Activated T-helper 1 cell treated with anti-CD3 and anti-CD28 coated beads, Interleukin-12 subunit alpha, Interleukin-12 subunit beta, Interleukin-2, Interleukin-4 antibody, amounts not matched to agents 30 ng/mL and 10 ng/mL and 1 ng/mL, durations not matched to agents 14 hours and 24 hours and 36 hours (primary cell): ENCODE measurements at regions of chr21 and their contacts with region 1.

Region 1: GRCh38 chr21:28884976-28885852 is 107.5 kb downstream of the LTN1 start:
- DNase-seq: peak; percentile 95
- H3K4me3 Mint-ChIP-seq: peak overlapping the region; percentile 95
- H3K27ac Mint-ChIP-seq: peak overlapping the region; percentile 99
- H3K4me1 Mint-ChIP-seq: peaks cover 21% of the 10 kb centered on the region
- H3K27me3 Mint-ChIP-seq: peaks cover 5% of the 10 kb centered on the region

Region 2: DNA sequence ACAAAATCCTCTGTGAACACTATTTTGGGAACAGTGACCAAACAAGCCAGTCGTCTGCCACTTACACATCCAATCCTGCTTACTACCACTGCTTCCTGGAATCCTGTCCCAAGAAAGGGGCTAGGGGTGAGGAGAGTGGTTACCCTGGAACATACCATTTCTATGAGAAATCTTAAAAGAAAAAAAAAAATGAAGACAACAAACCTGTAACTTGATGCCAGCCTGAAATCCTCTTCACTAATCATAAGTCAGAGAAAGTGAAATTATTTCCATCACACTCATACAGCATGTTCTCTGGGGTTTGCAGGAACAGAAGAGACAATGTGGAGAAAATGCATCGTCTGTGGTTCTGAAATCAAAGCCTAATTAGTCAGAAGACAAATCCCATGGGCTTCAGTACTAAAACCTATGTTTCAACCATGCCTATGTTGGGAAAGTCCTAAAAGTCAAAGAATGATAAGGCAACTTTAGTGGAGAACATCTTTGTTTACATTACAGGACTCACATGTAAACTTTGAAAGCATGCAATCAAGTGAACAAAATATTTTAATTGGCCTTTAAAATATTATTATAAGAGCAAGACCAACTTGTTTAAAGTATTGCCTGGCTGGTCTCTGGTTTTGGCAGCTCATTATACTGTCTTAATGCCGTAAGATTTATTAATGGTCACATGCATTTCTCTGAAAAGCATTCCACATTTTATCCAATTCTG is 113.3 kb before region 1 on chr21:
- intact Hi-C with region 1: loop called (anchors 2 kb)
- DNase-seq: no peak
- H3K4me3 Mint-ChIP-seq: no peak overlapping the region
- H3K27ac Mint-ChIP-seq: peak overlapping the region; percentile 18
- H3K4me1 Mint-ChIP-seq: peaks cover 68% of the 10 kb centered on the region
- H3K27me3 Mint-ChIP-seq: no peaks in the 10 kb centered on the region

Region 3: GRCh38 chr21:28943631-28944030 is 58.4 kb after region 1 on chr21:
- intact Hi-C with region 1: loop called (anchors 5 kb)
- DNase-seq: no peak
- H3K4me3 Mint-ChIP-seq: no peak overlapping the region
- H3K27ac Mint-ChIP-seq: no peak overlapping the region
- H3K4me1 Mint-ChIP-seq: peaks cover 4% of the 10 kb centered on the region
- H3K27me3 Mint-ChIP-seq: no peaks in the 10 kb centered on the region

Region 4: DNA sequence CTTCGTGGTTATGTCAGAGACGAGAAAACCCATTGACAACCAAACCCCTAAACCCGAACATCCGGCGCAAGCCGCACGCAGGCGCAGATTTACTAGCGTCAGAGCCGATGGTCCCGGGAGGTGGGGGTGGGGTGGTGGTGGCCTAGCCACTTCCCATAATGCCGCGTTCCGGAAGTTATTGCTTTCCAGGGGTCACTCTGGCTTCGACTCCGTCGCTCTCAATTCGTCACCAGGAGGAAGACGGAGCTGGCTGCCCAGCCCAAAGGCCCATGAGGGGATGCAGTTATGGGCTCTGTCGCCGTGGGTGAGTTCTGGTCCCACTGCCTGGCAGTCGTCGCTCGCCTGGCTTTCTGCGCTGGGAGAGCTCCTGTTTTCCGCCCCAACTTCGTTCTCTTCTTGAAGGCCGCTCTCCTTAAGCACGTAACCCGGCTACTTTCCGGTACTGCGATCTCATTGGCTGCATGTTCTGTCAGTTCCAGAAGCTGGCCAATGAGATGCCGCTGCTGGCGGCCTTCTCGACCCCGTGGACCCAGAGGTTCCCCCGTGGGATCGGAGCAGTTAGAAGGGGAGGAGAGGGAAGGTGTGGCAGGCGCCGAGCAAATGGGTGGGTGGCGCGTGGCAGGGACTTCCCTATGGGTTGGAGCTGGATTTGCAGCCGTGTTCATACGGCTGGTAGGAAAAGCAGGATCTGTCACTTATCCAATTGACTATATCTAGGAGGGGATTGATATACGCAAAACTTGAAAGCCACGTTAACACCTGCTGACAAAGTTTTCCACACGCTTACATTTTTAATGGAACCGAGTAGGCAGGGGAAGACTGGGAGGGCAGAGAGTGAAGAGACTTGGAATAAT is 139.5 kb after region 1 on chr21 and contains the start of gene USP16:
- intact Hi-C with region 1: loop called (anchors 1 kb)
- DNase-seq: peak; percentile 95
- H3K4me3 Mint-ChIP-seq: peak within 1 kb of the TSS; percentile 99
- H3K27ac Mint-ChIP-seq: peak within 1 kb of the TSS; percentile 97
- H3K4me1 Mint-ChIP-seq: peaks cover 39% of the 10 kb centered on the region
- H3K27me3 Mint-ChIP-seq: no peaks in the 10 kb centered on the region
- total RNA-seq, gene USP16: 44.7 and 48.7 TPM in 2 replicates

Region 5: GRCh38 chr21:29656504-29657239 is 771.5 kb after region 1 on chr21:
- intact Hi-C with region 1: loop called (anchors 10 kb)
- DNase-seq: peak; percentile 14
- H3K4me3 Mint-ChIP-seq: peak overlapping the region; percentile 45
- H3K27ac Mint-ChIP-seq: peak overlapping the region; percentile 82
- H3K4me1 Mint-ChIP-seq: peaks cover 39% of the 10 kb centered on the region
- H3K27me3 Mint-ChIP-seq: no peaks in the 10 kb centered on the region